Activated naive CD4-positive, alpha-beta T cell treated with anti-CD3 and anti-CD28 coated beads, Interleukin-2, amount 10 ng/mL, durations not matched to agents 7 days and 5 days (primary cell): ENCODE measurements at regions of chr7 and their contacts with region 1.

Region 1: DNA sequence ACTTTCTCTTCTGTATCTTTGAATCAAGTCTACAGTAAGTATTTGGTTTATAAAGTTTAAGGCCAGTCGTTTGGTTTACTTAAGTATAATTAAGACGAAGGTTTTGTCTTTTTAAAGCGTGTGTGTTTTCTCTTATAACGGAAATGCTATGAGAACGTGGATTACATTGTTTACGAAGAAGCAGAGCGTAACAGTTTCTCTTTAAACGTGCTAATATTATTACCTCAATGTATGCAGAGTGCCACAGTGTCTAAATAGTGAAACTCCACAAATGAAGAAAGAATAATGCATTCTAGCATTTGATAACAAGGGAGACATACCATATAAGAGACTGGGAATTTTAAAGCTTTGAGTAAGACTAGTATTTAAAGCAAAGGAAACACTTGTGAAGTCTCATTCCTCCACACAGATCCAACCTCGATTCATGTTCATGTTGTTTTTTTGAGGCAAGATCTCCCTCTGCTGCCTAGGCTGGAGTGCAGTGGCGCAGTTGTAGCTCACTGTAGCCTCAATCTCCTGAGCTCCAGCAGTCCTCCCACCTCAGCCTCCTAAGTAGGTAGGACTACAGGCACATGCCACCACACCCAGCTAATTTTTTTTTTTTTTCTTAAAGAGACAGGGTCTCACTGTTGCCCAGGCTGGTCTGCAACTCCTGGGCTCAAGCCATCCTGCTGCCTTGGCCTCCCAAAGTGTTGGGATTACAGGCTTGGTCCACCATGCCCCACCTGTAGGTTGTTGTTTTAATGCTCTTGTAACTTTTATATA is 75.1 kb downstream of the ANKRD61 start:
- DNase-seq: peak; percentile 67
- H3K4me3 Mint-ChIP-seq: peak overlapping the region; percentile 92
- H3K27ac Mint-ChIP-seq: peak overlapping the region; percentile 98
- H3K4me1 Mint-ChIP-seq: peaks cover 38% of the 10 kb centered on the region
- H3K27me3 Mint-ChIP-seq: no peaks in the 10 kb centered on the region

Region 2: DNA sequence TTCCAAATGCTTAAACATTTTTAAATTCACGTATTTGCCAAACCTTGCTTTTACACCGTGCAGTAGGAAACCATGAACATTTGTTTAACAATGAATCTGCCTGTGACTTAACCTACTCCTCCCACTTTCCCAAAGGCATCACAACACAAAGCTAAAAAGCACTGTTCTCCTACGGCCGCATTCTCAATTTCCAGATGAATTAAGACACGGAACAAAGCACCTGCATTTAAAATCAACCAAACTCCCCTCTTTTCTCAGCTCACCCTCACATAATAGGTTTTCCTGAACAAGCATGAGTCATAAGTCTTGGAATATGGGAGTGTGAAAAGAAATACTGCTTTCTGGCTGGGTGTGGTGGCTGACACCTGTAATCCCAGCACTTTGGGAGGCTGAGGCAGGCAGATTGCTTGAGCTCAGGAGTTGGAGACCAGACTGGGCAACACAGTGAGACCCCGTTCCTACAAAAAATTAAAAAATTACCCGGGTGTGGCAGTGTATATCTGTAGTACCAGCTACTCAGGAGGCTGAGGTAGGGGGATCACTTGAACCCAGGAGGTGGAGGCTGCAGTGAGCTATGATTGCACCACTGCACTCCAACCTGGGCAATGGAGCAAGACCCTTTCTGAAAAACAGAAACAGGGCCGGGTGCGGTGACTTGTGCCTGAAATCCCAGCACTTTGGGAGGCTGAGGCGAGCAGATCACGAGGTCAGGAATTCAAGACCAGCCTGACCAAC is 217.8 kb after region 1 on chr7:
- CTCF ChIA-PET with region 1: interaction called, 10 read pairs
- DNase-seq: no peak
- H3K4me3 Mint-ChIP-seq: no peak overlapping the region
- H3K27ac Mint-ChIP-seq: no peak overlapping the region
- H3K4me1 Mint-ChIP-seq: peaks cover 3% of the 10 kb centered on the region
- H3K27me3 Mint-ChIP-seq: peaks cover 11% of the 10 kb centered on the region